ENCODE measurements at regions of chr2 and their contacts with region 1.

Region 1: GRCh38 chr2:158456309-158457066 is at the starts of genes CCDC148 and PKP4:
- DNase-seq: peak; percentile 83
- H3K4me3 Mint-ChIP-seq: peak within 1 kb of the TSS; percentile 94
- H3K27ac Mint-ChIP-seq: peak within 1 kb of the TSS; percentile 86
- H3K4me1 Mint-ChIP-seq: peaks cover 22% of the 10 kb centered on the region
- H3K27me3 Mint-ChIP-seq: peaks cover 38% of the 10 kb centered on the region
- total RNA-seq, gene CCDC148: not detected in 2 replicates
- total RNA-seq, gene PKP4: 26.9 and 27.0 TPM in 2 replicates

Region 2: DNA sequence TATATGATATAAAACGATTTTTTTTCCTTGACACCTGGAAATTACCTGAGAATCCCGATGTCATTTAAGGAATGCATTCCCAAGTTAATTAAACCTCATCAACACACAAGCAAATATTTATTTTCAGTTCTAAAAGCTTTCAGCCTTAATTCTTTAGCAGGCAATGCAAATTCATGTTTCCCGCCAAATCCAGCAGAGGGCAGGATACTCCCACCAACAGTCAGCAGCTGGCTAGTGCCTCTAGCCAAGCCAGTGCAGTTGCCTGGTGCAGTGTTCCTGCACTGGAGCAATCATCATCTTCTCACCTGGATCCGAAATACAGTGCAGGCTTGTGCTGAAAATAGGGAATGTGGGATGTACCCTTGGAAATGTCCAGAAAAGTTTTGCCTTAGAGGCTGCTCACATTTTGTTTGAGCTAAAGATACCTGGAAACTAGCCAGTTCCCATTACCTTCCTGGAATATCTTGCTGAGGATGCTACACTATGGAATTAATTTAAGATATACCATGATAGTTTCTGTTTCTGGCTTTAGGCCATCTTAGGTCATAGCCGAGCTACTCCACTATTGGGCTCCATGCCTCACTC is 964.2 kb before region 1 on chr2:
- intact Hi-C with region 1: loop called (anchors 10 kb)
- DNase-seq: peak; percentile 56
- H3K4me3 Mint-ChIP-seq: no peak overlapping the region
- H3K27ac Mint-ChIP-seq: no peak overlapping the region
- H3K4me1 Mint-ChIP-seq: peaks cover 47% of the 10 kb centered on the region
- H3K27me3 Mint-ChIP-seq: no peaks in the 10 kb centered on the region

Region 3: DNA sequence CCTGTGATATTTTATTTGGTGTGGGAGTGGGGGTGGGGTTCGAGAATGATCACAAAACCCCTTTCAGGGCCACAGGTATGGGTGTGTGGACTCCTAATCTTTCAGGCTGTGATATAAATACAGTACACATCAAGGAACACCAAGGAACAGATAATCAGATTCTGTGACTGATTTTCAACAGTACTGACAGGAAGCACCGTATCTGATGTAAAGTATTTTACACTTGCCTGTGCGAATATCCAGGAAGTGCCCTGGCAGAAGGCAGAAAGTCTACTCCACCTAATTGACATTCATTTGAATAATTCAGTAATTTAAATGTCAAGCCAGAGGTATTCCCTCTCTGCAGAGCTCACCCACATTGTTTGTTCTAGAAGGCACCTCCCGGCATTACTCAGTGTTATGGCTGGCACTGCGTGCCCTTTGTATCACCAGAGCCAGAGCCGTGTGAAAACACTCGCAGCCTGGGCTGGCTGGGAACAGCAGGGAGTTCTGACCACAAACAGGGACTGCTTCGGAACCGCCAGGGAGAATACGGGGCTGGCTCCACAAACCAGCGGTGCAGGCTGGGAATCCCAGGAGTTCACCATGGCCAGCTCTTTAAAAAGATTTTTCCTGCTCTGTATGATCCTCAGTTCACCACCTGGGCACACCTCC is 672.2 kb before region 1 on chr2:
- intact Hi-C with region 1: loop called (anchors 10 kb)
- DNase-seq: no peak
- H3K4me3 Mint-ChIP-seq: no peak overlapping the region
- H3K27ac Mint-ChIP-seq: peak overlapping the region; percentile 74
- H3K4me1 Mint-ChIP-seq: peaks cover 69% of the 10 kb centered on the region
- H3K27me3 Mint-ChIP-seq: no peaks in the 10 kb centered on the region

Region 4: DNA sequence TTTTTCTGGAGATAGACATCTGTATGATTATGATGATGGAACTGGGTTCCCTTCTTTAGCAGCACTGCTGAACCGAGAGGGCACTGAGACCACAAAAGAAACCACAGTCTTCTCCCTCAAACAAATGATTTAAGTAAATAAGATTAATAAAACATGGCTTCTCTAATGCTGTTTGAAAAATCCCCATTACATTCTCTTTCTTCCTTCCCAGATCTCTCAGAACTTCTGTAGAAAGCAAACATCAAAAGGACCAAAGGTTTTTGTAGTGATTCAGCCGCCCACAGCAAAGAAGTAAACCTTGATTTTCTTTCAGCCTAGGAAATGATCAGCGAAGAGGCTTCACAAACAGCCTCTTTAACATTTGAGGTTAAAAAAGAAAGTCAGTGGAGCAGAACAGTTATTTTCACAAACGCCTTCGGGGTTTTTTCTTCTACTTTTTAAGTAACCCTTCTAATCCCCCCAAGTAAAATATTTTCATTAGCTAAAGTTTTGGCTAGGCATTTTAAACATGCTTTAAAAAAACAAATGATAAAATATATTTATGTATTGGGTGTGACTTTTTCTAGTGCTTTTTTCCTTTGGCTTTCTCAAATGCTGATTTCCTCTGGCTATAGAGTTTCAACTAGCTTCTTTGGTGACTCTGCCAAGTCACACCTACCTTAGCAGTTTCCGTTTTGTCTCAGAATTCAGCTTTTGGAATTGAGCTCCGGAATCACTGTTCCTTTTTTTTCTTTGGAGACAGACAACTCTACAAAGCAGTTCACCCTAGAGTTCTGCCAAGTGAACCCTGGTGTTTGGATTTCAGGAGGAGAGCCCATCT is 265.2 kb before region 1 on chr2:
- intact Hi-C with region 1: loop called (anchors 2 kb)
- DNase-seq: no peak
- H3K4me3 Mint-ChIP-seq: no peak overlapping the region
- H3K27ac Mint-ChIP-seq: peak overlapping the region; percentile 29
- H3K4me1 Mint-ChIP-seq: peaks cover 31% of the 10 kb centered on the region
- H3K27me3 Mint-ChIP-seq: peaks cover 27% of the 10 kb centered on the region

Region 5: GRCh38 chr2:159286709-159287441 is 830.4 kb after region 1 on chr2:
- intact Hi-C with region 1: loop called (anchors 10 kb)
- DNase-seq: peak; percentile 94
- H3K4me3 Mint-ChIP-seq: peak overlapping the region; percentile 79
- H3K27ac Mint-ChIP-seq: peak overlapping the region; percentile 78
- H3K4me1 Mint-ChIP-seq: peaks cover 22% of the 10 kb centered on the region
- H3K27me3 Mint-ChIP-seq: no peaks in the 10 kb centered on the region